H1 (cell line): ENCODE measurements at regions of chr2 and their contacts with region 1.

Region 1: DNA sequence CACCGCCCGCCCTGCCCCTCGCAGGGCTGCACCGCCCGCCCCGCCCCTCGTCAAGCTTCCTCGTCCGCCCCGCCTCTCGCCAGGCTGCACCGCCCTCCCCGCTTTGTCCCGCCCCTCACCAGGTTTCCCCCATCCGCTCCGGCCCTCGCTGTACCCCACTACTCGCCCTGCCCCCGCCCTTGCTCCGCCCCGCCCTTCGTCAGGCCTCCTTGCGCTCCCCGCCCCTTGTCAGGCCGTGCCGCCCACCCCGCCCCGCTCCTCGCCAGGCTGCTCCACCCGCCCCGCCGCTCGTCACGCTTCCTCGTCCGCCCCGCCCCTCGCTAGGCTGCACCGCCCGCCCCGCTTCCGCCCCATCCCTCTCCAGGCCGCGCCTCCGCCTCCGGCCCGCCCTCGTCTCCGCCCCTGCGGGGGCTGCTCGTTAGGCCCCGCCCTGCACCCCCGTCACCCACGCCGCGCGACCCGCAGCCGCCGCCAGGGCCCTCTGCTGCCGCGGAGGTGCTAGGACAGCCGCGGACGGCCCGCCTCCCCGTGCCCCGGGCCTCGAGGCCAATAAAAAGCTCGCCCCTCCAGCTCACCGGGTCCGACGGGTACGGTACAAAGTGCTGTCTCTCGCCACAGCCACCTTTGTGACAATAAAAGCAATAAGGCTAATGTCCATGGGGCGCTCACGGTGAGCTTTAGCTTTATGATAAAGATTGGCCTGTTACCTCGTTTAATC is 574 bp upstream of the DNPEP start:
- DNase-seq: peak; percentile 81 to 97
- H3K4me3 ChIP-seq: peak overlapping the region; percentile 36 to 75 (median 54)
- H3K27ac ChIP-seq: no peak overlapping the region
- H3K4me1 ChIP-seq: peaks cover 0 to 14% (median 4%) of the 10 kb centered on the region in 4 experiments; a peak in 5 of 7 replicates
- H3K27me3 ChIP-seq: no peaks in the 10 kb centered on the region; a peak in 1 of 7 replicates
- CTCF ChIP-seq: peak; percentile 33 to 67 (median 50)
- EP300 ChIP-seq: no peak; a peak in 1 of 3 replicates
- POLR2A ChIP-seq: no peak
- RAD21 ChIP-seq: peak in 1 of 2 experiments; percentile 24; a peak in 1 of 4 replicates

Region 2: DNA sequence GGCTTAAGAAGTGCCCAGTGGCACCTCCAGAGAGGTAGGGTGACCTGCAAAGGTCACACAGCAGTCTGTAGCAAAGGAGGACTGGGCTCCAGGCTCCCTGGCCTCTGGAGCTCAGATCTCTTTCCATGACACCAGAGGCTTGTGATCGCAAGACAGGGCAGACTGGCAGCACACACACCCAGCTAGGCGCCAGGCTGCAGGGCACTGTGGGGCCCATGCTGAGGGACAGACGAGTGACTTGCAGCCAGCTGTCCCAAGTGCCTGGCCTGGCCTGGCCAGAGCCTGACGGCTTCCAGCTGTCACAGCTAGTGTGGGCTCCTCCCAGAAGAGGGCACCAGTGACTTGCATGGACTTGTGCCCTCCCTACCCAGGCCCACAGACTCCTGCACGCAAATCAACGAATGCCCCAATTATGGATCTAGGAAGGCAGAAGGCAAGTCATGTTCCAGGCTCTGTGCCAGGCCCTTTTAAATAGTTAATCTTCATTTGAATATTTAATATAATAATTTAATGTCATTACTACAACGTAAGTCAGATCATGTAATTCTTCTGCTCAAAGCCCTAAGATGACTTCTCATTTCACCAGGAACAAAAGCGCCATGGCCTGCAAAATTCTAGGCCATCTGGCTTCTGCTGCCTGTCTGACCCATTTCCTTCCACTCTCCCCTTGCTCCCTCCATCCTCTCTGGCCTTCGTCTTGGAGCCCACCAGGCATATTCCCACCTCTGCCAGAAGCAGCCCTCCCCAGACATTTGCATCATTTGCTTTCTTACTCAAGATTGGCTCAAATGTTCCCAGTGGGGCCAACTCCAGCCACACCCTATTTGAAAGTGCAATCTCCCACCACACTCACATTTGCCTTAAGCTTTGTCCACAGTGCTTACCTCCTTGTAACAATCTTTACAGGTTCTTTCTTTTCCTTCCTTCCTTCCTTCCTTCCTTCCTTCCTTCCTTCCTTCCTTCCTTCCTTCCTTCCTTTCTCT is 42.6 kb after region 1 on chr2:
- CTCF ChIA-PET with region 1: interaction called, 15 read pairs
- POLR2A ChIA-PET with region 1: no interaction called
- DNase-seq: no peak
- H3K4me3 ChIP-seq: no peak overlapping the region
- H3K27ac ChIP-seq: no peak overlapping the region
- H3K4me1 ChIP-seq: peaks cover 0 to 13% (median 7%) of the 10 kb centered on the region in 4 experiments; a peak in 5 of 7 replicates
- H3K27me3 ChIP-seq: peaks cover 0 to 13% (median 10%) of the 10 kb centered on the region in 4 experiments; a peak in 6 of 7 replicates
- CTCF ChIP-seq: peak; percentile 49 to 50 (median 49)
- EP300 ChIP-seq: no peak
- POLR2A ChIP-seq: no peak
- RAD21 ChIP-seq: peak; percentile 44 to 63

Region 3: GRCh38 chr2:219484343-219485200 is 96.3 kb after region 1 on chr2:
- CTCF ChIA-PET with region 1: interaction called, 11 read pairs
- POLR2A ChIA-PET with region 1: interaction called, 3 read pairs
- DNase-seq: peak in 1 of 2 experiments; percentile 68
- H3K4me3 ChIP-seq: peak overlapping the region in 3 of 4 experiments; percentile 26 to 56 (median 32); a peak in 6 of 8 replicates
- H3K27ac ChIP-seq: no peak overlapping the region
- H3K4me1 ChIP-seq: peaks cover 6 to 36% (median 28%) of the 10 kb centered on the region in 4 experiments
- H3K27me3 ChIP-seq: peaks cover 20 to 49% (median 36%) of the 10 kb centered on the region in 4 experiments
- CTCF ChIP-seq: no peak; a peak in 1 of 4 replicates
- EP300 ChIP-seq: no peak
- POLR2A ChIP-seq: no peak
- RAD21 ChIP-seq: no peak

Region 4: GRCh38 chr2:219521066-219521880 is 133.0 kb after region 1 on chr2:
- CTCF ChIA-PET with region 1: interaction called, 25 read pairs
- POLR2A ChIA-PET with region 1: no interaction called
- DNase-seq: peak in 1 of 2 experiments; percentile 86
- H3K4me3 ChIP-seq: peak overlapping the region in 1 of 4 experiments; percentile 63; a peak in 1 of 8 replicates
- H3K27ac ChIP-seq: no peak overlapping the region
- H3K4me1 ChIP-seq: peaks cover 0 to 28% (median 19%) of the 10 kb centered on the region in 4 experiments; a peak in 6 of 7 replicates
- H3K27me3 ChIP-seq: peaks cover 0 to 14% (median 4%) of the 10 kb centered on the region in 4 experiments; a peak in 3 of 7 replicates
- CTCF ChIP-seq: peak in 2 of 3 experiments; percentile 92 to 94; a peak in 3 of 4 replicates
- EP300 ChIP-seq: 0 out of 3 replicates have a peak, but pooled peaks of 1 of the 2 experiments have one; percentile 54
- POLR2A ChIP-seq: no peak
- RAD21 ChIP-seq: peak; percentile 64 to 79

Region 5: GRCh38 chr2:219566640-219567039 is 178.4 kb after region 1 on chr2:
- CTCF ChIA-PET with region 1: no interaction called
- POLR2A ChIA-PET with region 1: no interaction called
- DNase-seq: no peak
- H3K4me3 ChIP-seq: no peak overlapping the region
- H3K27ac ChIP-seq: 0 out of 2 replicates have a peak overlapping the region, but pooled peaks have one; percentile 67
- H3K4me1 ChIP-seq: peaks cover 6 to 53% (median 43%) of the 10 kb centered on the region in 4 experiments
- H3K27me3 ChIP-seq: peaks cover 0 to 2% (median 0%) of the 10 kb centered on the region in 4 experiments; a peak in 1 of 7 replicates
- CTCF ChIP-seq: no peak
- EP300 ChIP-seq: no peak
- POLR2A ChIP-seq: no peak
- RAD21 ChIP-seq: no peak